GM12878 (cell line): ENCODE measurements at regions of chr16 and their contacts with region 1.

Region 1: DNA sequence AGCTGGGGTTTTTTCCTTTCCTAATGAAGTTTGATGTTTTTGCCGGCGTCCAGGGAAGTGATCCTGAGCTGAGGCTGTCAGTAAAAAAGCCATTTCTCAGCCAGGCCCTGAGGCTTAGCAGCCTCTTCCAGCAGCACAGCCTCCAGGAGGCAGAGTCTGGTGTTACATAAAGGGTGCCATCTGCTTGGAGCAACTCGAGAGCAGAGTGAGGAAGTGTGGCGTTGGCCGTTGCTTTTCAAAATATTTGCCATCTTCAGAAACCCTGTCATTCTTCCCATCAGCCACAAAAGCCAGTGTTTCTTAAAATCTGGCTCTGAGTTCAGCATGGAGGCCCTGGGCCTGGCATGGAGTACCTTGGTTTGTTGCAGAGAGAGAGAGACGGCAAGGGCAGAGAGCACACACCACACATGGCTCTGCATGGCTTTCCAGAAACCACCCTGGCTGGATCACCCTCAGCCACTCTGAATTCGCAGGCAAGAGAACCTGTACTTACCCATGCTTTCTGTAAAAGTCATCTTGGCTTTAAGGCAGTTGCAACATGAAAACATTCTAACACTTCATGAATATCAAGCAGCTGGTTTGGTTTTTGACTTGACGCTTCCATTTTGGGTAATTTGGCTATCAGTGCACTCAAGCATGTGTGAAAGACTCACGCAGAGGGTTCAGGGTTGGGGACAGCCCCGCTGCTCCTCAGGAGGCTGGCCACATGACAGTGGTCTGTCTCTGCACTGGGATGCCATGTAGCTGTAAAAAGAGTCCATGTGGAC is 21.0 kb downstream of the PMM2 start:
- DNase-seq: peak; percentile 57
- ATAC-seq: peak; percentile 88
- H3K4me3 ChIP-seq: no peak overlapping the region
- H3K27ac ChIP-seq: peak overlapping the region; percentile 66
- H3K4me1 ChIP-seq: peaks cover 18% of the 10 kb centered on the region
- H3K27me3 ChIP-seq: no peaks in the 10 kb centered on the region
- CTCF ChIP-seq: no peak
- EP300 ChIP-seq: peak; percentile 51 to 68; a peak in 1 of 4 replicates
- POLR2A ChIP-seq: no peak
- RAD21 ChIP-seq: no peak

Region 2: DNA sequence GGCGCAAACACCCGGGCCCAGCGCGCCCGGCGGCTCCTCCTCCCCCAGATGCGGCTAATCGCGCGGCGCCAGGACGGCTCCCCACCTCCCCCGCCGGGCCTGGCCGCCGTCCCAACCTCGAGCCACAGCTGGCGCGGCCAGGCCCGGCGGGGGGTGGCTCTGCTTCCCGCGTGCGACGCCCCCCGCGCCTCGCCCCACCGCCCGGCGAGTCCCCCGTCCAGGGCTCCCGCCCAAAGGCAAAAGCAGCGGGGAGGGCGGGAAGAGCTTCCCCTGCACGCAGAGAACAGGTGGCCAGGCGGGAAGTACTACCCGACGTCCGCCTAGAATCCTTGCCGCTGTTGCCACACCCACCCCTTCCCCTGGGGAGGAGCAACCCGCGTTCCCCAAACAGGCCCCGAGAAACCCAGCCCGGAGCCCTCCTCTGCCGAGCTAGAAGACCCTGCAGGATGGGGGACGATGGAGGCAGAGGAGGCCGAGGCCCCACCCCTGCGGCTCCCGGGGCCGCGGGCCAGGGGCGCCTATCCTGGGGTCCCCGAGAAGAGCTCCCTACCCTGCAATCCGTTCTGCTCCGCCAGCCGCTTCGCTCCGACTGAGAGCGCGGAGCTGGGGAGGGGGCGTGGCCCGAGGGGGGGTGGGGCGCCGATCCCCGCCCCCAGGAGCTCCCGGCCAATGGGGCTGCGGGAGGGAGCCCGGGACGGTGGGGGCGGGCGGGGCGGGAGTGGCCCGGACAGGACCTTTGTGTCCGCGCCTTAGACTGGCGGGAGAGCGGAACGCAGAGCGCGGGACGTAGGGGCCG is 49.9 kb after region 1 on chr16 and contains the start of gene CARHSP1:
- CTCF ChIA-PET with region 1: interaction called, 3 read pairs
- POLR2A ChIA-PET with region 1: interaction called, 7 read pairs
- RAD21 ChIA-PET with region 1: interaction called, 10 read pairs
- SMC1A ChIA-PET with region 1: interaction called, 4 read pairs
- in situ Hi-C with region 1: no loop called
- intact Hi-C with region 1: no loop called
- DNase-seq: peak; percentile 51
- ATAC-seq: peak; percentile 82
- H3K4me3 ChIP-seq: peak within 1 kb of the TSS; percentile 95
- H3K27ac ChIP-seq: peak within 1 kb of the TSS; percentile 90
- H3K4me1 ChIP-seq: peaks cover 32% of the 10 kb centered on the region
- H3K27me3 ChIP-seq: no peaks in the 10 kb centered on the region
- CTCF ChIP-seq: no peak
- EP300 ChIP-seq: no peak
- POLR2A ChIP-seq: peak; percentile 79
- RAD21 ChIP-seq: no peak
- polyA plus RNA-seq, gene CARHSP1: 5.5 to 8.4 TPM

Region 3: GRCh38 chr16:8899709-8900317 is 81.1 kb after region 1 on chr16:
- CTCF ChIA-PET with region 1: interaction called, 10 read pairs
- POLR2A ChIA-PET with region 1: no interaction called
- RAD21 ChIA-PET with region 1: interaction called, 3 read pairs
- SMC1A ChIA-PET with region 1: interaction called, 3 read pairs
- in situ Hi-C with region 1: no loop called
- intact Hi-C with region 1: no loop called
- DNase-seq: no peak
- ATAC-seq: peak; percentile 90
- H3K4me3 ChIP-seq: no peak overlapping the region
- H3K27ac ChIP-seq: peak overlapping the region; percentile 18; the same call in 1 of the 2 replicates
- H3K4me1 ChIP-seq: peaks cover 5% of the 10 kb centered on the region
- H3K27me3 ChIP-seq: no peaks in the 10 kb centered on the region
- CTCF ChIP-seq: peak in 1 of 3 experiments; percentile 31; a peak in 1 of 6 replicates
- EP300 ChIP-seq: no peak
- POLR2A ChIP-seq: no peak
- RAD21 ChIP-seq: no peak